Heart right ventricle (tissue), 16 donors: ENCODE measurements at regions of chr6 and their contacts with region 1.

Region 1: DNA sequence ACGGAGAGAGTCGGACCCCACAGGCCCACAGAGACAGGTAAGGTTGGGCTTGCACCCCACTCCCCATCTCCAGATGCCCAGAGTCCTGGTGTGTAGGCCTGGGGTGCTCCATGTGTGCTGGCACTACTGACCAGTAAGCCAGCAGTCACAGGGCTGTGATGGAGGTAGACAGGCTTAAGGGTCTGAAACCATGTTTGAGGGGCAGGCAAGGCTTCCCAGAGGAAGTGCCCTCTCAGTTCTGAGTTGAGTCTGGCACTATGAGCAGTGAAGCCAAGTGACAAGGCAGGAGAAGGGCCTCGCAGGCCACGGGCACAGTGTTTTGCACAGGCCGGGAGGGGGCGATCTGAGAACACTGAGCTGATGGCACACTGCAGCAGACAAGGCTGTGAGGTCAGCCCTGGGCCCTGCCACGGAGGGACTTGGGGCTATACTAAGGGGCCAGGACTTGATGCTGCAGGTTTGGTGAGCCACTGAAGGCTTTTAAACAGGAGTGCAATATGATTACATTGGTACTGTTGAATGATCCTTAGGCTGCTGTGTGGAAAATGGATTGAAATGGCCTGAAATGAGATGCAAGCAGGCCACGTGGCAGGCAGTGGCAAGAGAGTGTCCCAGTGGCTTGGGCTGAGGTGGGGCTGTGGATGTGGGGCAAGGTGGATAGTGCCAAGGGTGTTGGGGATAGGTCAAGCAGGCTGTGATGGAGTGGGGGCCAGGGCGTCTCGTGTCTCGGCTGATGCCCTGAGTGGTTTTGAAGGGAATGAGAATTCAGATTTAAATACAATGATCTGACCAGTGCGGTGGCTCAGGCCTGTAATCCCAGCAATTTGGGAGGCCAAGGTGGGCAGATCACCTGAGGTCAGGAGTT is 20.3 kb downstream of the TTBK1 start:
- DNase-seq: peak; percentile 76
- ATAC-seq: peak; percentile 76 to 86 (median 80)
- H3K4me3 ChIP-seq: no peak overlapping the region
- H3K27ac ChIP-seq: no peak overlapping the region
- H3K4me1 ChIP-seq: peaks cover 0 to 23% (median 11%) of the 10 kb centered on the region in 9 donors
- H3K27me3 ChIP-seq: peaks cover 0 to 3% (median 0%) of the 10 kb centered on the region in 7 donors
- CTCF ChIP-seq: peak; percentile 44 to 82 (median 71)

Region 2: GRCh38 chr6:43328528-43328927 is 65.0 kb after region 1 on chr6:
- intact Hi-C with region 1: loop called in 5 of 10 experiments (anchors 2 to 10 kb)
- DNase-seq: peak; percentile 38 to 57
- ATAC-seq: peak; percentile 67 to 98 (median 94)
- H3K4me3 ChIP-seq: no peak overlapping the region
- H3K27ac ChIP-seq: peak overlapping the region; percentile 58 to 92 (median 75)
- H3K4me1 ChIP-seq: peaks cover 0 to 15% (median 0%) of the 10 kb centered on the region in 9 donors
- H3K27me3 ChIP-seq: no peaks in the 10 kb centered on the region
- CTCF ChIP-seq: no peak

Region 3: DNA sequence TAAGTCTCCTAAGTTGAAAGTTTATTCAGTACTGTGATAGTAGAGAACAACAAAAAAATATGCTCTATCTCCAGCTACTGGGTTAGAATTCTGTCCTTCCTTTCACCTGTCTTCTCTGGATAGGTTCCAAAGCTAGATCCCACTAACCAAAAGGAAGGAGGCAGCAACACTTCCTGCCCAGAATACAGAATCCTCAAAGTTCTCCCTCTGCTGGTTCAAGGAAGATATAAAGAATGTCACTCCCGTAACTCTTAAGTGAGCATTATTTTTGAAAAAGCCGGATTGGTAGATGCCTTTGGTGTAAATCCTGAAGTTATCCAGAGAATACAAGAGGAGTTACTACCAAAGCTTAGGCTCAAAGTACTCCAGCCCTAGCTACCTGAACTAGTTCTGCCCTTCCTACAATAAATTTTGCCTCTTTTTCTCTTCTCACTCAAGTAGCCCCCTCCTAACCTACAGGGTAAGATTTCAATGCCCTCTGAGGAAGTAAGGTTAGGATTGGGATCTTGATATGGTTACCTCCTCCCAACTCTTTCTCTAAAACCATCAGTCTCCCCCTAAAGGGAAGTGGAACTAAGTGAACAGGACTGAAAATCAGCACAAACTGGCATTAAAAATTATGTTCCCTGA is 71.0 kb after region 1 on chr6:
- intact Hi-C with region 1: loop called in 7 of 10 experiments (anchors 1 to 10 kb)
- DNase-seq: no peak
- ATAC-seq: peak in 3 of 8 donors; percentile 28 to 73 (median 37)
- H3K4me3 ChIP-seq: no peak overlapping the region
- H3K27ac ChIP-seq: peak overlapping the region in 3 of 10 donors; percentile 9 to 25 (median 23)
- H3K4me1 ChIP-seq: peaks cover 0 to 25% (median 13%) of the 10 kb centered on the region in 9 donors
- H3K27me3 ChIP-seq: no peaks in the 10 kb centered on the region
- CTCF ChIP-seq: peak; percentile 24 to 63 (median 53)

Region 4: GRCh38 chr6:43355862-43356590 is 92.5 kb after region 1 on chr6:
- intact Hi-C with region 1: loop called in 8 of 10 experiments (anchors 2 to 10 kb)
- DNase-seq: peak in 1 of 2 donors; percentile 15
- ATAC-seq: peak in 7 of 8 donors; percentile 71 to 87 (median 79)
- H3K4me3 ChIP-seq: no peak overlapping the region
- H3K27ac ChIP-seq: peak overlapping the region in 1 of 10 donors; percentile 12
- H3K4me1 ChIP-seq: peaks cover 0 to 9% (median 0%) of the 10 kb centered on the region in 9 donors
- H3K27me3 ChIP-seq: no peaks in the 10 kb centered on the region
- CTCF ChIP-seq: peak; percentile 10 to 65 (median 47)

Region 5: DNA sequence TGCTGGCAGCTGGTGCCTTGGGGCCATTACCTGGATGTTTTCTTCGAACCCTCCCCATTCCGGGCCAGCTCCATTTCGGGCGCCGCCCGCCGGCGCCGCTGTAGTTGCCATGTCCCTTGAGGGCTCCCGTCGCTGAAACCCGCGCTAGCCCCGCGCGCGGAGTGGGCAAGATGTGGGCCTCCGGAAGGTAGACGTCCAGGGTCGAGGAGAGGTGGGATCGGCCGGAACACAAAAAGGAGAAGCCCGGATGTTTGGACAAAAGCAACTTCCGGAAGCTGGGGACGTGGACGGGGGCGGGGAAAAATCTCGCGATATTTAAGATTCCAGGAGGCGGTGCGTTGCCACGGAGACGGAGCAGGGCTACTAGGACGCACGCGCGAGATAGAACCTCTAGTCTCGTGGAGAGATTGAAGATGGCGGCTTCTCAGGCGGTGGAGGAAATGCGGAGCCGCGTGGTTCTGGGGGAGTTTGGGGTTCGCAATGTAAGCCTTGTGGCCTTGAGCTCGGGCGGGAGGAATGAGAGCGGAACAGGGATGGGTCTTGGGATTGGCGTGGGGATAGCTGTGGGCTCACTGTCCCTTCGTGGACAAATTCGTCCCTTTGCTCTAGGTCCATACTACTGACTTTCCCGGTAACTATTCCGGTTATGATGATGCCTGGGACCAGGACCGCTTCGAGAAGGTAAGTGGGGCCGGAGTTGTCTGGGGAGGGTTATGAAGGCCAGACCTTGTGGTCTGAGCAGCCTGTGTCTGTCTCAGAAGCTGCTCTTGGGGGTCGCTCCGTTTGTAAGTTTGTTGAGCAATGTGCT is 253.4 kb after region 1 on chr6 and contains the starts of genes POLR1C and YIPF3:
- intact Hi-C with region 1: loop called in 1 of 10 experiments (anchors 10 kb)
- DNase-seq: peak; percentile 93 to 99
- ATAC-seq: peak; percentile 87 to 98 (median 96)
- H3K4me3 ChIP-seq: peak within 1 kb of the TSS; percentile 68 to 98 (median 91)
- H3K27ac ChIP-seq: peak within 1 kb of the TSS; percentile 54 to 97 (median 90)
- H3K4me1 ChIP-seq: peaks cover 18 to 69% (median 60%) of the 10 kb centered on the region in 9 donors
- H3K27me3 ChIP-seq: no peaks in the 10 kb centered on the region
- CTCF ChIP-seq: no peak
- total RNA-seq, gene POLR1C: 10.3 to 21.9 (median 15.3) TPM
- total RNA-seq, gene YIPF3: 52.6 to 86.3 (median 69.0) TPM